AG04449 (cell line): ENCODE measurements at regions of chr21 and their contacts with region 1.

Region 1: GRCh38 chr21:25370311-25370744 is 237.0 kb downstream of the MRPL39 start:
- DNase-seq: peak; percentile 88
- H3K4me3 ChIP-seq: no peak overlapping the region; the same call in 1 of the 2 replicates
- CTCF ChIP-seq: no peak

Region 2: DNA sequence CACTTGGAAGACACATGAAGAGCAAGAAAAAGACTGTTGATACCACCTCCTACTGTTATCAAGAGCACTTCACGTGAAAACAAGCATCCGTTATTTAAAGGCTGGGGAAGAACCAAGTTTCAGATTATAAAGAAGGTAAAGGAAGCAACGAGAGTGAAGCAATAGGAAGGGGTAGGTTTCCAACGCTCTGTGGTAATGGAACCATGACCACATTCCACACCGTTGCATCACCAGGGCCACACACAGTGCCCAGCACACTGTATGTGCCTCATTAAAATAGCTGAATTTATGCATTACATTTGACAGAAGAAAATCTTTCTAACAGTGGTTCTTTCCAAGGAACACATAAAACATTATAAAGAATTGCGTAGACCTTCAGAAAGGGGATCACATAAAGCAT is 198.9 kb before region 1 on chr21:
- CTCF ChIA-PET with region 1: no interaction called
- POLR2A ChIA-PET with region 1: no interaction called
- DNase-seq: peak; percentile 12
- H3K4me3 ChIP-seq: no peak overlapping the region
- CTCF ChIP-seq: no peak

Region 3: DNA sequence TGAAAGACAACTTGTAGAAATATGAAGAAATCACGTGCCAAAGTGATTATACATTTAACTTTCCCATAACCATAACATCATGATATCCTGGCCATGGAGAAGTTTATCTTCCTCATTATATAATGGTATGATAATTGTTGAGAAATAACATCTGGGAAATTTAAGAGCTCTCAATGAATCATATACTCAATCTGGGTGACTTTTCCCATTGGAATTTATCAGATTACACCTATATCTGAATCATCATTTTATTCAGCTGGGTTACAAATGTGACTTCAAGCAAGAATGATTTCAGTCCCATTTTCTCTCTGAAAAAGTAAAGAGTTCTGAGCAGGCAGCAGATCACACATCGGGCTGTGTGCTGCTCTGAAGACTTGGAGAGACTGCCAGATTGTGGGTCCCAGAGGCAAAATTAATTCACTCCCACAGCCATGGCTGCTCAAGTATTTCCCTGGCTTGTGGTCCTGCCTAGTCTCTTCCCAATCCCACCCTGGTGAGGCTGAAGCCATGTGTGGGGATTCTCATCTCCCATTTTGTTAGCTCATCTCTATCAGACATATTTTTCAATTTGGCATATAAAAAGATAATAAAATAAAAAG is 41.0 kb before region 1 on chr21:
- CTCF ChIA-PET with region 1: no interaction called
- POLR2A ChIA-PET with region 1: interaction called, 16 read pairs
- DNase-seq: peak; percentile 74
- H3K4me3 ChIP-seq: no peak overlapping the region
- CTCF ChIP-seq: no peak